ENCODE measurements at regions of chr21 and their contacts with region 1.

Region 1: DNA sequence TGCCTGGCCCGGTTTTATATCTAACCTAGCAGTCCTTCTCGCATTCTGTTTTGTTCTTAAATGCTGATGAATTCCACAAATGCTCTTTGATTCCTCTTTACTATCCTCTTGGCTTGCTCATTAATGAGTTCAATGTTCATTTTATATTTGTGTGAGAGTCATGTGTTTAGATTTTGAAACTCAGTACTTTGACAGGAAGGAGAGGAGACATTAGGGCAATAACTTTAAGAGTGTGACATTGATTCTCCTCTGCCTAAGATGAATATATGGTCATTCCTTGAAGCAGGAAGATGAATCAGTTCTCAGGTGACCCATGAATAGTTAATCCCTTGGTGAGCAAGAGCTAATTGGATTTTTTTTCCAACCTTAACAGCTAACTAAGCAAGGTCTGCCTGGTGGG is 84.1 kb downstream of the MRPS6 start:
- DNase-seq: no peak
- H3K4me3 ChIP-seq: no peak overlapping the region
- H3K27me3 ChIP-seq: no peaks in the 10 kb centered on the region
- CTCF ChIP-seq: no peak

Region 2: GRCh38 chr21:34091607-34092006 is 65.9 kb before region 1 on chr21:
- CTCF ChIA-PET with region 1: no interaction called
- POLR2A ChIA-PET with region 1: interaction called, 10 read pairs
- DNase-seq: no peak
- H3K4me3 ChIP-seq: no peak overlapping the region
- H3K27me3 ChIP-seq: no peaks in the 10 kb centered on the region
- CTCF ChIP-seq: peak; percentile 43